ENCODE measurements at regions of chr10 and their contacts with region 1.

Region 1: GRCh38 chr10:73358331-73359279 is at the start of gene CFAP70:
- DNase-seq: peak; percentile 83 to 98 (median 90)
- ATAC-seq: peak; percentile 96
- H3K4me3 ChIP-seq: peak within 1 kb of the TSS; percentile 71 to 75
- H3K4me3 Mint-ChIP-seq: peak within 1 kb of the TSS; percentile 98
- H3K27ac ChIP-seq: peak within 1 kb of the TSS; percentile 78 to 88
- H3K27ac Mint-ChIP-seq: peak within 1 kb of the TSS; percentile 96
- H3K4me1 ChIP-seq: peaks cover 5% of the 10 kb centered on the region
- H3K4me1 Mint-ChIP-seq: peaks cover 16% of the 10 kb centered on the region
- H3K27me3 ChIP-seq: peaks cover 0 to 8% of the 10 kb centered on the region in 2 experiments
- H3K27me3 Mint-ChIP-seq: peaks cover 2% of the 10 kb centered on the region
- CTCF ChIP-seq: no peak
- total RNA-seq, gene CFAP70: 2.4 to 2.8 TPM

Region 2: DNA sequence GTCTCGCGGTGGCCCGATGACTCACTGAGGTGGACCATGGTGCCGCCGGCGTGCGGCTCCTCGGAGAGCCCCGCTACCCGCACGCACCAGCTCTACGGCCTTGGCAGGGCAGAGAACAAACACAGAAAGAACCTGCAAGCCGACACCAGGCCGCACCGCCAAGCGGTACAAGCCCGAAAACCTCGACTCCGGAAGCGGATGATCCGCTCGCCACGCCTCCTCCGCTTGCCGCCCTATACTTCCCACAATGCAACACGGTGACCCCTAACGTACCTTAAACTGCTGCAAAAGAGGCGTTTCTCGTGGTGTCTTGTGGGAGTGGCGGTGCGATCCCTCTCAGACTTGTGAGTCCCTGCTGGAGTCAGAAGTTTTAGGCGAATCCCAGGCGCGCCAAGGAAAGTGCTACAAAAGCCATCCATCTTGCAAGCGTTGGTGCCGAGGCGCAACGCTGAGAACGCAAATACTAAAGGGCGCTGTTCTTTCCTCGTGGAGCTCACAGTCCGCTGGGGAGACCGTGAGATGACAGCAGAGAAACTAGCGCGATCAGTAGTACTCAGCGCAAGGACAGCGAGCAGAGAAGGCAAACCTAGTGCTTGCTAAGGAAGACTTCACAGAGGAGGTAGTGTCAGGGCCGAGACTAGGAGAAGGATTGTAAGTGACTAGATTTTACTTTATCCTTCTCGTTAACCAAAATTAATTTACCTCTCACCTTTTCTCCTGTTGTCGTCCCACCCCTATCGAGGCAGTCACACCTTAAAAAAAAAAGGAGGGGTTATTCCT is 106.0 kb before region 1 on chr10 and contains the start of gene MRPS16:
- CTCF ChIA-PET with region 1: no interaction called
- POLR2A ChIA-PET with region 1: interaction called, 4 read pairs
- intact Hi-C with region 1: loop called (anchors 1 to 2 kb)
- DNase-seq: peak; percentile 86 to 97 (median 93)
- ATAC-seq: peak; percentile 90
- H3K4me3 ChIP-seq: peak within 1 kb of the TSS; percentile 87 to 96
- H3K4me3 Mint-ChIP-seq: peak within 1 kb of the TSS; percentile 99
- H3K27ac ChIP-seq: peak within 1 kb of the TSS; percentile 80 to 94
- H3K27ac Mint-ChIP-seq: peak within 1 kb of the TSS; percentile 96
- H3K4me1 ChIP-seq: peaks cover 19% of the 10 kb centered on the region
- H3K4me1 Mint-ChIP-seq: peaks cover 46% of the 10 kb centered on the region
- H3K27me3 ChIP-seq: no peaks in the 10 kb centered on the region
- H3K27me3 Mint-ChIP-seq: no peaks in the 10 kb centered on the region
- CTCF ChIP-seq: no peak
- total RNA-seq, gene MRPS16: 23.6 to 28.7 TPM

Measured in CD8-positive, alpha-beta T cell (primary cell).